ENCODE measurements at regions of chr12 and their contacts with region 1.

Region 1: GRCh38 chr12:54032627-54033100 is at the start of gene HOXC5:
- DNase-seq: peak in 1 of 2 donors; percentile 38
- ATAC-seq: peak in 5 of 8 donors; percentile 12 to 51 (median 36)
- H3K4me3 ChIP-seq: peak within 1 kb of the TSS in 7 of 10 donors; percentile 5 to 39 (median 24)
- H3K27ac ChIP-seq: no peak within 1 kb of the TSS
- H3K4me1 ChIP-seq: peaks cover 3 to 34% (median 12%) of the 10 kb centered on the region in 9 donors
- H3K27me3 ChIP-seq: peaks cover 64 to 100% (median 100%) of the 10 kb centered on the region in 7 donors
- CTCF ChIP-seq: peak; percentile 45 to 87 (median 75)
- total RNA-seq, gene HOXC5: not detected

Region 2: DNA sequence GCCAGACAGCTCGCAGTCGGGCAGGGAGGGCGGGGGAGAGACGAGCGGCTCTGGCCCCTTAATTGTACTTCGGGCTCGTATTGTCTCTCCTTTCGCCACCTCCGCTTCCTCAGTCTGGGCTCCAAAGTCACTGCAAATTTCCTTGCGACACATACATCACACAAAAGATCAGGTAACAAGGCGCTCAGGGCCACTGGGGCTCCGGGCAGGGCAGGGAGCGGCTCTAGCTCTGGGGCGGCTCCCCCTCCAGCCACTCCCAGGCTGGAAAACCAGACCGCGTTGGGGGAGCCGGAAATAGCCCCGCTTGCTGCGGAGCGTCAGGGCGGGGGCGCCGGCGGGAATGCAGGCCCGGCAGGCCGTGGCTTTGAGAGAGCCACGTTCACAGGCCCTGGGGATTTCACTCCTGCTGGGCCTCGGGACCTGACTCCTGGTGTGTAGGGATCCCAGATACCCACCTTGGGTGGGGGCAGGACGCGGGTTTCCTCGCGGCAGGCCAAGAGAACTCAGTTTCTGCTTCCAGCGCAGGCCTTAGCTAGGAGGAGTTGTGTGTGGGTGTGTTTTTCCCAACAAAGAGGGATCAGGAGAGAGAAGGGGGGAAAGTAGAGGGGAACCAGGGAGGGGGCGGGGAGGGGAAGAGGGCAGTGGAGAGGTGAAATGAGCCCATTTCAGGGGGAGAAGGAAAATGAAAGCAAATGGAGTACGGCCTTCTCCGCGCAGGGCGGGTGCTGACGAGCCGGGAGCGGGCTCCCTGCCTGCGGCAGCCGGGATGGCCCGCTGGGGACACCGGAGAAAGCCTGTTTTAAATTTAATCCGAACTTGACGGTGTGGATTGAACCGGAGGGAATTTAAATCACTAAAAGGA is 37.1 kb before region 1 on chr12:
- intact Hi-C with region 1: loop called in 1 of 10 experiments (anchors 5 kb)
- DNase-seq: no peak
- ATAC-seq: peak; percentile 36 to 66 (median 52)
- H3K4me3 ChIP-seq: peak overlapping the region; percentile 26 to 61 (median 56)
- H3K27ac ChIP-seq: no peak overlapping the region
- H3K4me1 ChIP-seq: peaks cover 3 to 46% (median 36%) of the 10 kb centered on the region in 9 donors
- H3K27me3 ChIP-seq: peaks cover 68 to 100% (median 100%) of the 10 kb centered on the region in 7 donors
- CTCF ChIP-seq: no peak

Region 3: DNA sequence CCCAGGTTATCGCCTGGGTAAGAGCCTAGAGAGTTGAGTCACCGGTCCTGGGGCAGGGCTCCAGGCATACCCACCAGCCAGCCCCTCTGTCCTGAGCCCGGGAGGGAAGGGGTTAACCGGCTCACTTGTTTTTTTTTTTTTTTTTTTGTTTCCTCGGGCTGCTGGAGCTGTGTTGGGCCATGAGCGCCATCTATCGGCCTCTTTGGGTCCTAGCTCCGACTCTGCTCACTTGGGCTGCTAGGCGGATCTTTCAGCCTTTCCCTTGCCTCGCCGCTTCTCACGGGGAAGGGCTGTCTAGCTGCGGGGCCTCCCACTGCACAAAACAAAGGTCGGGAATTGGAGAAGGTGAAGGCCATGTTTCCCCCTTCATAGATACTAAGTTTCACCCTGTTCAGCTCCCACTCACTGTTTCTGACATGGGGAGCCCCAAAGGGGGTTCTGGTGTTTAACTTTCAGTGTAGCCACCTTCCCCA is 158.9 kb after region 1 on chr12:
- intact Hi-C with region 1: loop called in 4 of 10 experiments (anchors 1 to 5 kb)
- DNase-seq: peak; percentile 72 to 80
- ATAC-seq: peak; percentile 43 to 71 (median 60)
- H3K4me3 ChIP-seq: no peak overlapping the region
- H3K27ac ChIP-seq: no peak overlapping the region
- H3K4me1 ChIP-seq: peaks cover 0 to 34% (median 14%) of the 10 kb centered on the region in 9 donors
- H3K27me3 ChIP-seq: peaks cover 0 to 69% (median 63%) of the 10 kb centered on the region in 7 donors
- CTCF ChIP-seq: peak; percentile 73 to 87 (median 82)

Measured in heart right ventricle (tissue), 16 donors.